ENCODE measurements at regions of chr2 and their contacts with region 1.

Region 1: DNA sequence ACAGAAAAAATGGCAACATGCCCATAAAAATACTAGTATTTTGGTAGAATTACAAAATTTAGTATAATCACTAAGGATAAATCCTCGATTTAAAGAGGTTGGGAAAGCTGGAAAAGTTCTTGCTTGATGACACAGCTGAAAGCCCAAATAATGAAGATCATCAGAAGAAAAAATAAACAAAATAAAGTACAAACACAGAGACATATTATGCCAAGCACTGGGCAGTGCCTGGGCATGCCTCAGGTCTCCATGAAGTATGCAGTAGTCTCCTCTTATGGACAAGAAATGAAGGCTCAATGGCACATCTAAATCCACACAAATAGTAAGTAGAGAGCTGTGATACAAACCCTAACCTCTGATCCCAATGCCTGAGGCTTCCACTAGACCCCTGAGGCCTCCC is 57.7 kb downstream of the RNU4ATAC start:
- DNase-seq: no peak
- ATAC-seq: peak; percentile 77
- H3K4me3 ChIP-seq: no peak overlapping the region
- H3K27ac ChIP-seq: peak overlapping the region; percentile 77; the same call in 1 of the 2 replicates
- H3K4me1 ChIP-seq: peaks cover 10% of the 10 kb centered on the region
- H3K27me3 ChIP-seq: no peaks in the 10 kb centered on the region
- CTCF ChIP-seq: no peak
- POLR2A ChIP-seq: no peak
- RAD21 ChIP-seq: no peak

Region 2: GRCh38 chr2:121205321-121205942 is 382.9 kb before region 1 on chr2:
- CTCF ChIA-PET with region 1: no interaction called
- POLR2A ChIA-PET with region 1: no interaction called
- dilution Hi-C with region 1: no loop called
- in situ Hi-C with region 1: no loop called
- intact Hi-C with region 1: no loop called
- DNase-seq: no peak
- ATAC-seq: peak; percentile 11; the same call in 1 of the 2 replicates
- H3K4me3 ChIP-seq: no peak overlapping the region
- H3K27ac ChIP-seq: no peak overlapping the region
- H3K4me1 ChIP-seq: no peaks in the 10 kb centered on the region
- H3K27me3 ChIP-seq: peaks cover 21% of the 10 kb centered on the region
- CTCF ChIP-seq: no peak
- POLR2A ChIP-seq: no peak
- RAD21 ChIP-seq: no peak

Region 3: DNA sequence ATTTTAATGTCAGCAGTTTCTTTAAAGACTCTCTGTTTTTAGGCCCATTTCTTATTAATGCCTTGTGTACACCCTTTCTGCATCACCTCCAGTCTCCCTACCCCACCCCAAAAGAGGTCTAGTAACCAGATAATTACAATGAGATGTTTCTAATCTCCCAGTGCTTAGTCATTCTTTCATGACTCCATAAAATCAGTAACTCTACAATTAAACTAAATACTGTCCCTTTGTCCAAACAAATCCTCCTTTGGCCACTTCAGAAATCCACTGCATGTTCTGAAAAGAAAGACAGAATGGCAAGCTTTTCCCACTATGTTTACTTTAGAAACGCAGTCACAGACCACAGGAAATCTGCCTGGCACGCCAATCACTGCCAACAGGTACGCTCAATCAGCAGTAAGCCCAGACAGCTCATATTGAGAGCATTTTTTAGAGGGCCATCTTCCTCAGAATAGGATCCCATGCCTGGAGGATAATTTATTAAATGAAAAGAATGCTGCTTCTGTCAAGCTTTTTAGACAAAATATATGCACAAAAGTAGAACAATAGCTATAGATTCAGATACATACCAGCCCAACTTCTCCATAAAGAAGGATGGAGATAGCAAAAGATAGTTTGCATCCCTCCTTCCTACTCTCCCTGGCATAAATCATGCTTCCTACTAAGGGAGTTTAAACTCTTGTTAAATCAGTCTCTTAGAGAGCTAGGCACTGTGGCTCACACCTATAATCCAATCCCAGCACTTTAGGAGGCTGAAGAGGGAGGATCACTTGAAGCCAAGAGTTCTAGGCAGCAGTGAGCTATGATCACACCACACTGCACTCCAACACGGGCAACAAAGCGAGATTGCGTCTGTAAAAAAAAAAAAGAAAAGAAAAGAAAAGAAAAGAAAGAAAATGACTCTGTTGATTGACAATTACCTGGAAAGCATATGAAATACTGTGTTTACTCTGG is 46.3 kb after region 1 on chr2:
- CTCF ChIA-PET with region 1: no interaction called
- POLR2A ChIA-PET with region 1: interaction called, 5 read pairs
- dilution Hi-C with region 1: no loop called
- in situ Hi-C with region 1: no loop called
- intact Hi-C with region 1: loop called (anchors 5 kb)
- DNase-seq: peak; percentile 66
- ATAC-seq: peak; percentile 91
- H3K4me3 ChIP-seq: no peak overlapping the region
- H3K27ac ChIP-seq: peak overlapping the region; percentile 95
- H3K4me1 ChIP-seq: peaks cover 10% of the 10 kb centered on the region
- H3K27me3 ChIP-seq: no peaks in the 10 kb centered on the region
- CTCF ChIP-seq: no peak
- POLR2A ChIP-seq: no peak
- RAD21 ChIP-seq: no peak

Measured in IMR-90 (cell line).